Activated CD8-positive, alpha-beta T cell treated with anti-CD3 and anti-CD28 coated beads, Interleukin-2, amount 10 ng/mL, durations not matched to agents 7 days and 5 days (primary cell): ENCODE measurements at regions of chr5 and their contacts with region 1.

Region 1: DNA sequence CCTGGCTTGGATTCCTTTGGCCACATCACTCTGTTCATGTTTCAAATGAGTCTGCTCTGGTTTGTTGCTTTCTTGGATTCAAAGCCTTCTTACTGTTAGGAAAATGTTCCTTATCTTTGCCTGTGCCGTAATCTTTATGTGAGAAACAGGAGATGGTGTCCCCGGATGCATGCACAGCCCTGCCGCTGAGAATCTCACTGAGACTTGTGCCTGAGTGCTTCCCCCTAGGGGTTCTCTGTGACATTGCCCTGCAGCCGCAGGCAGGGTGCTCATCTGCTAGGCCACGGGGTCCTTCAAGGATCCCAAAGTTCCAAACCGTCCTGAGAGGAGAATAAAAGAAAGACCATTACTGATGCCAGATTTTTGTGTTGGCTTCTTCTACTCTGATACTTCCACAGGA is 81.4 kb upstream of the ANKRD55 start:
- DNase-seq: no peak
- ATAC-seq: no peak
- H3K4me3 Mint-ChIP-seq: no peak overlapping the region
- H3K27ac Mint-ChIP-seq: no peak overlapping the region
- H3K4me1 Mint-ChIP-seq: peaks cover 16% of the 10 kb centered on the region
- H3K27me3 Mint-ChIP-seq: peaks cover 3% of the 10 kb centered on the region

Region 2: DNA sequence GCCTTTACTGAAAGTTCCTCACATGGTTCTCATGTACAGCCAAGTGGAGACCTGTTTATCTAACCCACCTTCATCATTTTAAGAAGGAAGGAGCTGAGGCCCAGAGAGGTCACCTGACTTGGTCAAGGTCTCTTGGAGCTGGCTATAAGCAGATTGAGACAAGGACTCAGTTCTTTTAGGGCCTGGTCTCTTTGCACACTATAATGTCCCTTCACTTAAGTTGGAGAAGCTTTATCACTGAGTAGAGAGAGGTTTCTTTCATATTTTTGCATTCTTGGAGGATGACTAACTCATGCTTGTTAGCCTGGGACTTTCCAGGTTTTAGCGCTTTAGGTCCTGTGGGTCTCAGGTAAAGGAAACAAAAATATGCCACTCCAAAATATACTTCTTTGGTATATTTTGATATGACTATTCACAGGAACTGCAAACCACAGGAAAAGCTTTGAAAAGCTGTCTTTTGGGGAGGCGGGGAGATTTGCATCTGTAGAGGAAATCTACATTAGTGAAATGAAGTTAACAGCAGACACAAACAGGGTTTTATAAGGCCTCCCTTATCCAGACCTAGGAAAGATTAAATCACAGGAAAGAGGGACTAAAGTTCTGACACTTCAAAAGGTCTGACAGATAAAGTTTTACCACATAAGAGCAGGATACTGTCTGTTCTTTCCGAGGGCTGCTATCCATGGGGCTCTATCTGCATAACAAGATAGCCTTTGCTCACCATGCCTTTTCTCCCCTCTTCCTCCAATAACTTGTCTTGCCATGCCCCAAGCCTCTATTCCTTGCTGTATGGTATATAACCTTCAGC is 14.4 kb after region 1 on chr5:
- CTCF ChIA-PET with region 1: interaction called, 10 read pairs
- POLR2A ChIA-PET with region 1: interaction called, 6 read pairs
- DNase-seq: peak; percentile 55
- ATAC-seq: peak; percentile 55
- H3K4me3 Mint-ChIP-seq: peak overlapping the region; percentile 40
- H3K27ac Mint-ChIP-seq: peak overlapping the region; percentile 88
- H3K4me1 Mint-ChIP-seq: peaks cover 59% of the 10 kb centered on the region
- H3K27me3 Mint-ChIP-seq: no peaks in the 10 kb centered on the region

Region 3: DNA sequence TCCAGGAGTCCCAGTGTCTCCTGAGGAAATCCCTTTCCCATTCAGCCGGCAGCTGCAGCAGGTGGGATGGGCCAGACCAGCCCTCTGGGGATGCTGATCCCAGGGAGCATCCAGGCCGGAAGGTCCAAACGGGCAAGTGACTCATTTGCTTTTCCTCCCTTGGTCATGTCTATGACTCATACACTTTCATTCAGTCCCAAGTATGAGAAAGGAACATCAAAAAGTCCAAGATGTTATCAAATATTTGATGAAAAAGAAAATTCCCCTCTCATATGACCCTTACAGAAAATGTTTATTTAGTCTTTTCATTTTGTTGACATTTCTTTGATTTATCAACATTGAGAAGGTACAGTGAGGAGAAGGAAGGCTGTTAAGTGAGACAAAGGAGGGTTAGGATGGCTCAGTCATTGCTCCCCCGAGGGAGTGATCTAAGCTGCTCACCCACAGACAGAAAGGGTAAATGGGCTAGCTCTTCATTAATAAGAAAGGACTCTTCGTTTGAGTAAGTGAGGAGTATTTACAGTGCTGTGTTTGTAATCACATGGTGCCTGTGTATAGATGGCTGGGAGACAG is 36.2 kb after region 1 on chr5:
- CTCF ChIA-PET with region 1: no interaction called
- POLR2A ChIA-PET with region 1: no interaction called
- DNase-seq: no peak
- ATAC-seq: no peak
- H3K4me3 Mint-ChIP-seq: no peak overlapping the region
- H3K27ac Mint-ChIP-seq: no peak overlapping the region
- H3K4me1 Mint-ChIP-seq: no peaks in the 10 kb centered on the region
- H3K27me3 Mint-ChIP-seq: no peaks in the 10 kb centered on the region